ENCODE measurements at regions of chr6 and their contacts with region 1.

Region 1: DNA sequence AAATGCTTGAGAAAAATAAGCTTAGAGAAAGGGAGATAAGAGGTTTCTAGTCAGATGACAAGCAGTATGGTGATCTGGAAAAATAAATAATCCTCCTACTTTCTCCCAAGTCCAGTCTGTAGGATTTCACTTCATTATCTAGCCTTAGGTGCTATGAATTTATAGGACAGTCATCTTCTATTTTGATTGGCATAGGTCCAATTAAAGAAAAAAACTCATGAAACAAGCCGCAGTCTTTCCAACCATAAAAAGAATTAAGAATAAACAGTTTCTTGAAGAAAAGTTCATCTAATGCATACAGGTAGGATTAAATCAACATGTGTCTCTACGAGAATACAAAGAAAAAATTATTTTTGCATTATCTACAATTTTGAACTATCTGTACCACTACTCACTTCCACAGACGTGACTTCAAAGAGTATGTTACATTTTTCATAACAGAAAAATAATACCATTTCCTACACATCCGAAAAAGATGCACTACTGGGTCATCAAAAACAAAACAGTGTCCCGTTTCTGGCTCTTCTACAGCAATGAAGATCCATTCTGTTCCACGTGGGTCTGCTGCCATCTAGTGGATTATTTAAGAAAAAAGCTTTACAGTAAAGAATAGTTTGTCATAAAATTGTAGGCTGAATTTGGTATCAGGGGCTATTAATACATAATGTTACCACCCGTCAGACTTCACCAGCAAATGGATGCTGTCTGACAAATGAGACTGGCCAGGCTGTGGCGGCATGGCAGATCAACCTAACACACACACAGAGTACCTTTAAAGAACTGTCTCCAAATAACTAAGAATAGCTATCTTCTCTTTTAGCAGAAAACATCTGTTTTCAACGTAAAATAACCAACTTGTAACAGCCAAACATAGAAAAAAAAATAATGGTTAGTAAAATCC is 28.9 kb downstream of the STX7 start:
- DNase-seq: no peak
- H3K4me3 ChIP-seq: no peak overlapping the region
- H3K27ac ChIP-seq: no peak overlapping the region
- H3K4me1 ChIP-seq: peaks cover 0 to 36% (median 28%) of the 10 kb centered on the region in 4 donors
- H3K27me3 ChIP-seq: no peaks in the 10 kb centered on the region
- CTCF ChIP-seq: peak; percentile 57 to 69 (median 66)
- EP300 ChIP-seq: no peak
- POLR2A ChIP-seq: no peak

Region 2: DNA sequence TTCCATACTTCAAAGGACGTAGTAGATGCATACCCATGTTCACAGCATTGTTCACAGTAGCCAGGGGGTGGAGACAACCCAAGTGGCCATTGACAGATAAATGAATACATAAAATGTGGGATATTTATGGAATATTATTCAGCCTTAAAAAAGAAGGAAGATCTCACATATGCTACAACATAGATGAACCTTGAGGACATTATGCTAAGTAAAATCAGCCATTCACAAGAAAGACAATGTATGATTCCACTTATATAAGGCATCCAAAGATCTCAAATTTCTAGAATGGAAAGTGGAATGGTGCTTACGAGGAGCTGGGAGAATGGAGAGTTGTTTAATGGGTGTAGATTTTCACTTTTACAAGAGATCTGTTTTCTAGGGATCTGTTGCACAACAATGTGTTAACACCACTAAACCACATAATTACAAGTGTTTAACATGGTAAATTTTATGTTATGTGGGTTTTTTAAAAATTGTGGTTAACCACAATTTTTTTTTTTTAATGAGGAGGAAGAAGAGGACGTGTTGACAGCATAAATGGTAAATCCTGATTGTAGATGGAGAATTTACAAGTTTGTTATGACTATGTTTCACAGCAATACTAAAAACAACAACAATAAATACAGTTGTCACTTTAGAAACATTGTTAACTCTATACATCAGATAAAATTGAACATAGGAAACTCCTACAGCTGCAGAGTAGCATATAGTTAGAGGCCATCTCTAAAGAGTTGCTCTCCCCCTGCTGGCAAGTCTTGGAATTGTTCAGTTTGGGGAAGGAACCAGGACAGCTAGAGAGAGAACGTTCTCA is 574.4 kb before region 1 on chr6:
- intact Hi-C with region 1: loop called (anchors 10 kb)
- DNase-seq: peak; percentile 72
- H3K4me3 ChIP-seq: no peak overlapping the region
- H3K27ac ChIP-seq: no peak overlapping the region
- H3K4me1 ChIP-seq: no peaks in the 10 kb centered on the region
- H3K27me3 ChIP-seq: peaks cover 0 to 8% (median 0%) of the 10 kb centered on the region in 3 donors
- CTCF ChIP-seq: peak; percentile 15 to 89 (median 71)
- EP300 ChIP-seq: no peak
- POLR2A ChIP-seq: no peak

Region 3: DNA sequence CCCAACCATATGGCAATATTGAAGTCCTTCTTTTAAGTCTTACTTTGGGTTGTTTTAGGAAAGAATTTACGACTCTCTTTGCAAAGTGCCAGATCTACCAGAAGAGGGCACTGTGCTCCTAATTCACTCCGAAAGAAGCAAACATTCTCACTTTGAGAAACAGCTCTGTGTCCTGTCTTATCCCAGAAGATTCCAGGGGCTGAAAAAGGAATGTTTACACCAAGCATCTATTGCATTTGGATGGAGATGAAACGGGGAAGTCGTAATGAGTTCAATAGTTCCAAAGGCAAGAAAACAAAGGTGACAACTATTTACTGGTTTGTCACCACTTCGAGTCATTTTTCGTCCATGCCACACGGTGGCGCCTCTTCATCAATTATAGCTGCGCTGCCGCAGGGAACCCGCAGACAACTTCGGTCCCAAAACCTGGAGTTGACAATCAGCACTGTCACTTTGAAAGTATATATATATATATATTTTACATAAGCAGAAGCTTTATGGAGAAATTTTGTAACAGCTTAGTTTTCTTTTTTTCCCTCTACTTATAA is 204.4 kb before region 1 on chr6:
- intact Hi-C with region 1: loop called (anchors 1 kb)
- DNase-seq: peak; percentile 82
- H3K4me3 ChIP-seq: peak overlapping the region; percentile 24 to 46 (median 42)
- H3K27ac ChIP-seq: no peak overlapping the region
- H3K4me1 ChIP-seq: no peaks in the 10 kb centered on the region
- H3K27me3 ChIP-seq: no peaks in the 10 kb centered on the region
- CTCF ChIP-seq: peak; percentile 72 to 94 (median 89)
- EP300 ChIP-seq: no peak
- POLR2A ChIP-seq: no peak

Region 4: GRCh38 chr6:132300323-132300949 is 183.6 kb before region 1 on chr6:
- intact Hi-C with region 1: loop called (anchors 2 kb)
- DNase-seq: no peak
- H3K4me3 ChIP-seq: no peak overlapping the region
- H3K27ac ChIP-seq: no peak overlapping the region
- H3K4me1 ChIP-seq: no peaks in the 10 kb centered on the region
- H3K27me3 ChIP-seq: no peaks in the 10 kb centered on the region
- CTCF ChIP-seq: peak in 3 of 4 experiments; percentile 10 to 37 (median 34)
- EP300 ChIP-seq: no peak
- POLR2A ChIP-seq: no peak

Region 5: DNA sequence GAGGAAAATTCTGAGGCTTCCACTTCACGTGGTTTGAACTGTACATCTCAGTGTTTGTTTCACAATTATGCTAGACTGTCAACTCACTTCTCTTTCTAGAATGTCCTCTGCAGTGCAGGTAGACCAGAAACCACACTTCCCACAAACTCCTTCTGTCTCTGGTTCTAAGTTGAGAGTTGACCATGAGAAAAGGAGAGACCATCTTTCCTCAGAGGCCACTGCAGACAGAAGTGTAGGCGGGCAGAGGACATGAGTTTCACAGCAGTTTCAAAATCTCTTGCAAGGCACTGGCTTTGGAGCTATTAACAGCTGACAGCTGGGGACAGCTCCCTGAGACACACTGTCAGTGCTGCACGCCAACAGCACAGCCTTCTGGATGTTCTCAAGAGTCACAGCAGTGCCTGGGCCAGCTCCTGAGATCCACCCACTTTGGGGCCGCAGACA is 27.3 kb before region 1 on chr6:
- intact Hi-C with region 1: no loop called
- DNase-seq: peak; percentile 68
- H3K4me3 ChIP-seq: no peak overlapping the region
- H3K27ac ChIP-seq: no peak overlapping the region
- H3K4me1 ChIP-seq: no peaks in the 10 kb centered on the region
- H3K27me3 ChIP-seq: no peaks in the 10 kb centered on the region
- CTCF ChIP-seq: no peak
- EP300 ChIP-seq: no peak
- POLR2A ChIP-seq: no peak

Region 6: DNA sequence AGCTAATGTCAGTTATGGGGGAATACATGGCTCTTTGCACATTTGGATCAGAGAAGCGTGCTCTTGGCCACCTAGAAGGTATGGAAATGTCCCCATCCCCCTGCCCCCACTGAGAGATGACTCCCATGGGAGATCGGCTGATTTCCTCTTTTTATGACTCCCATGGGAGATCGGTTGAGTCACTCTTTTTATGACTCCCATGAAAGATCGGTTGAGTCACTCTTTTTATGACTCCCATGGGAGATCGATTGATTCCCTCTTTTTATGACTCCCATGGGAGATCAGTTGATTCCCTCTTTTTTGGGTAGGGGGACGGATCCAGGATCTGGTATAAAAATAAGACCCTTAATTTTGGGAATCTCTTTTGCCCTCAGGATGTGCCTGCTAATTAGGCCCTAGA is 43.8 kb after region 1 on chr6:
- intact Hi-C with region 1: no loop called
- DNase-seq: no peak
- H3K4me3 ChIP-seq: no peak overlapping the region
- H3K27ac ChIP-seq: no peak overlapping the region
- H3K4me1 ChIP-seq: no peaks in the 10 kb centered on the region
- H3K27me3 ChIP-seq: no peaks in the 10 kb centered on the region
- CTCF ChIP-seq: no peak
- EP300 ChIP-seq: no peak
- POLR2A ChIP-seq: no peak

Region 7: DNA sequence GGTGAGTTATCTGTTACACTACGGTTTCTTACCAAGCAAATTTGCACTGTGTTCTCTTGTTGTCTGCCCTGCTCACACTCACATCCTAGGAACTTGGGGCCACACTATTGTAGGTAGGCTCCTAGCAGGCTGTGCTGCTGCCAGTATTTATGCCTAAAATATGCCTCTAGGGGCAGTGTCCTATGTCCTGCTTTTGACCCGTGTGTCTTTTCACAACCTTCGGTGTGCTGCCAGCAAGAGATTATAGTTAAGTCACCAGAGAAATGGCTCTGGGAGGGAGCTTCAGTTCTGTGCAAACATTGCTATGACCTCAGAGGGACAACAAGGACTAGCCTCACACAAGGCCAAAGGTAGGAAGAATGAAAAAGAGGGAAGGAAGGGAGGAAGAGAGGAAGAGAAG is 114.4 kb after region 1 on chr6:
- intact Hi-C with region 1: no loop called
- DNase-seq: no peak
- H3K4me3 ChIP-seq: no peak overlapping the region
- H3K27ac ChIP-seq: no peak overlapping the region
- H3K4me1 ChIP-seq: no peaks in the 10 kb centered on the region
- H3K27me3 ChIP-seq: no peaks in the 10 kb centered on the region
- CTCF ChIP-seq: no peak
- EP300 ChIP-seq: no peak
- POLR2A ChIP-seq: no peak